Common myeloid progenitor, CD34-positive (primary cell): ENCODE measurements at regions of chr19 and their contacts with region 1.

Region 1: GRCh38 chr19:16088351-16089009 is 12.2 kb downstream of the TPM4 start:
- DNase-seq: no peak
- H3K4me3 ChIP-seq: no peak overlapping the region
- H3K27ac ChIP-seq: no peak overlapping the region
- H3K4me1 ChIP-seq: peaks cover 0 to 46% (median 38%) of the 10 kb centered on the region in 4 experiments
- H3K27me3 ChIP-seq: no peaks in the 10 kb centered on the region

Region 2: DNA sequence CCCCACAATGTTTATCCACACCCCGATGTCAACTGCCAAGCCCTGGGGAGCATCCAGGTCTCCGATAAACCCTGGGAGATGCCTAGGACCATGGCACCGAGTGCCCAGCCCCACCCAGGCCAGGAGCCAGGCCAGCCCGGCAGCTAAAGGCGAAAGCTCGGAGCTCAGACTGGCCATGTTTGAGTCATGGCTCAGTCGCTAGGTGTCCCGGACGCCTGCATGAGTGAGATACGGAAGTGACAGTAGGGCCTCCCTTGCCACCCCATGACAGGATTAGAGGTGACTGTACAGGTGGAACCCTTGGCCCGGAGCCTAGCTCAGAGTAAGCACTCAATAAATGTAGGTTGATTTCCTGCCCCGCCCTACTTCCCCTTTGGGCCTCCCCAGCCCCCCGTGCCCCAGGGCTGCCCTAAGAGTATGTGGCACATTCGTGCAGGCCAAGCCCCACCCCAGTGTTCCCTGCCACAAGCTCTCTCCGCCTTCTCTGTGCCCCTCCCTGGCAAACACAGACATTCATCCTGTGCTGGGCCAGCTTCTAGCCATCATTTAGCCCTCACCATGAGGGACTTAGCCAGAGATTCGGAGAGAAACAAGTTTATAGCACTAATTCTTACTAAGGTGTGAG is 18.0 kb before region 1 on chr19:
- CTCF ChIA-PET with region 1: interaction called, 47 read pairs
- POLR2A ChIA-PET with region 1: interaction called, 15 read pairs
- DNase-seq: peak; percentile 91 to 99 (median 98)
- H3K4me3 ChIP-seq: peak overlapping the region in 4 of 7 experiments; percentile 7 to 50 (median 42)
- H3K27ac ChIP-seq: peak overlapping the region; percentile 62 to 89
- H3K4me1 ChIP-seq: peaks cover 2 to 77% (median 50%) of the 10 kb centered on the region in 4 experiments
- H3K27me3 ChIP-seq: no peaks in the 10 kb centered on the region

Region 3: GRCh38 chr19:16076154-16076957 is 12.1 kb before region 1 on chr19 and contains the start of gene TPM4:
- CTCF ChIA-PET with region 1: interaction called, 47 read pairs
- POLR2A ChIA-PET with region 1: interaction called, 15 read pairs
- DNase-seq: peak; percentile 80 to 89 (median 88)
- H3K4me3 ChIP-seq: peak within 1 kb of the TSS; percentile 76 to 98 (median 85)
- H3K27ac ChIP-seq: peak within 1 kb of the TSS; percentile 74 to 87
- H3K4me1 ChIP-seq: peaks cover 13 to 81% (median 71%) of the 10 kb centered on the region in 4 experiments
- H3K27me3 ChIP-seq: no peaks in the 10 kb centered on the region